CD8-positive, alpha-beta T cell (primary cell): ENCODE measurements at regions of chr6 and their contacts with region 1.

Region 1: DNA sequence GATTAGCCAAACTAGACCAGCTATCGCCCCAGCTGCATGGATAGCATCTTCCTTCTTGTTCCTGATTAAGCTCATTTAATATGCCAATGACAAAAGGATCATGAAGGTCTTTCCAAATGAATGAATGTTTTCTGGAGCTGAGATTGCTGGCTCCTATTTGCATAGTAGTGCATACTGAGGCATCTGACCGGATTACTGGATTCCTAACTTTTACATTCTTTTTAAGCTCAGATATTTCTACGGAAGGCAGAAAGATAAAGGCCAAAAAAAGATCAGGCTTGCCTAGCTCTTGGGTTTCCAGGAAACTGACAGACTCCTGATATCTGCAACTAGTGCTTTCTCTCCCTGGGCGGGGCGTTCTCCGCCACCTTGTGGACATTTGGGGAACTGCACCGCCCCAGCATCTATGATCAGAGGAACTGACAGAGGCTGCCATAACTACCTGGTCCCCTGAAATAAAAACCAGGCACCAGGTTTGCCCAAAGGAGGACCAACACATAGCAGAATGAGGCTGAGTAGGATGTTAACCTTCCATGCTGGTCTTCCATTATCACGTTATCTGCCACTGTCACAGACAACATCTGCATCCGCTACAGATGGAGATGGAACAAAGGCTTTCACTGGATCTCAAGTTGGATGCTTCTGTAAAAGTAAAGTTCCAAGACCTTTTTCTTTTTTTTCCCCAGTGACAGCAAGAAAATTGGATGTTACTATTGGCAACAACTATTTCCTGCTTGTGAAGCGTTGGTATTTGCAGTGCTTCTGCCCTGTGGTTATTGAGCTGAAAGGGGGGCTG is 33.2 kb downstream of the NT5E start:
- DNase-seq: peak; percentile 62 to 94 (median 78)
- ATAC-seq: peak; percentile 99
- H3K4me3 ChIP-seq: no peak overlapping the region
- H3K4me3 Mint-ChIP-seq: no peak overlapping the region
- H3K27ac ChIP-seq: no peak overlapping the region
- H3K27ac Mint-ChIP-seq: no peak overlapping the region
- H3K4me1 ChIP-seq: peaks cover 7% of the 10 kb centered on the region
- H3K4me1 Mint-ChIP-seq: peaks cover 13% of the 10 kb centered on the region
- H3K27me3 ChIP-seq: no peaks in the 10 kb centered on the region
- H3K27me3 Mint-ChIP-seq: no peaks in the 10 kb centered on the region
- CTCF ChIP-seq: peak; percentile 99

Region 2: GRCh38 chr6:85354761-85355618 is 128.1 kb before region 1 on chr6:
- CTCF ChIA-PET with region 1: interaction called, 130 read pairs
- POLR2A ChIA-PET with region 1: interaction called, 3 read pairs
- intact Hi-C with region 1: loop called (anchors 1 kb)
- DNase-seq: peak; percentile 14 to 81 (median 64)
- ATAC-seq: peak; percentile 87
- H3K4me3 ChIP-seq: no peak overlapping the region
- H3K4me3 Mint-ChIP-seq: no peak overlapping the region
- H3K27ac ChIP-seq: no peak overlapping the region
- H3K27ac Mint-ChIP-seq: no peak overlapping the region
- H3K4me1 ChIP-seq: no peaks in the 10 kb centered on the region
- H3K4me1 Mint-ChIP-seq: peaks cover 3% of the 10 kb centered on the region
- H3K27me3 ChIP-seq: peaks cover 0 to 2% of the 10 kb centered on the region in 2 experiments
- H3K27me3 Mint-ChIP-seq: no peaks in the 10 kb centered on the region
- CTCF ChIP-seq: peak; percentile 97

Region 3: GRCh38 chr6:85404502-85405174 is 78.5 kb before region 1 on chr6:
- CTCF ChIA-PET with region 1: interaction called, 13 read pairs
- POLR2A ChIA-PET with region 1: interaction called, 6 read pairs
- intact Hi-C with region 1: loop called in 1 of 2 experiments (anchors 2 kb)
- DNase-seq: no peak
- ATAC-seq: peak; percentile 26
- H3K4me3 ChIP-seq: no peak overlapping the region
- H3K4me3 Mint-ChIP-seq: peak overlapping the region; percentile 19
- H3K27ac ChIP-seq: peak overlapping the region in 1 of 2 experiments; percentile 22
- H3K27ac Mint-ChIP-seq: peak overlapping the region; percentile 91
- H3K4me1 ChIP-seq: peaks cover 56% of the 10 kb centered on the region
- H3K4me1 Mint-ChIP-seq: peaks cover 70% of the 10 kb centered on the region
- H3K27me3 ChIP-seq: no peaks in the 10 kb centered on the region
- H3K27me3 Mint-ChIP-seq: no peaks in the 10 kb centered on the region
- CTCF ChIP-seq: no peak

Region 4: GRCh38 chr6:85460921-85461797 is 21.9 kb before region 1 on chr6:
- CTCF ChIA-PET with region 1: interaction called, 187 read pairs
- POLR2A ChIA-PET with region 1: interaction called, 6 read pairs
- intact Hi-C with region 1: loop called in 1 of 2 experiments (anchors 1 kb)
- DNase-seq: peak in 7 of 9 experiments; percentile 26 to 75 (median 62)
- ATAC-seq: peak; percentile 64
- H3K4me3 ChIP-seq: peak overlapping the region in 1 of 2 experiments; percentile 0
- H3K4me3 Mint-ChIP-seq: peak overlapping the region; percentile 70
- H3K27ac ChIP-seq: peak overlapping the region; percentile 22 to 69
- H3K27ac Mint-ChIP-seq: peak overlapping the region; percentile 92
- H3K4me1 ChIP-seq: peaks cover 100% of the 10 kb centered on the region
- H3K4me1 Mint-ChIP-seq: peaks cover 98% of the 10 kb centered on the region
- H3K27me3 ChIP-seq: no peaks in the 10 kb centered on the region
- H3K27me3 Mint-ChIP-seq: peaks cover 2% of the 10 kb centered on the region
- CTCF ChIP-seq: no peak

Region 5: GRCh38 chr6:85506441-85507093 is 23.5 kb after region 1 on chr6:
- CTCF ChIA-PET with region 1: interaction called, 16 read pairs
- POLR2A ChIA-PET with region 1: no interaction called
- intact Hi-C with region 1: no loop called
- DNase-seq: no peak
- ATAC-seq: no peak
- H3K4me3 ChIP-seq: no peak overlapping the region
- H3K4me3 Mint-ChIP-seq: no peak overlapping the region
- H3K27ac ChIP-seq: no peak overlapping the region
- H3K27ac Mint-ChIP-seq: no peak overlapping the region
- H3K4me1 ChIP-seq: no peaks in the 10 kb centered on the region
- H3K4me1 Mint-ChIP-seq: no peaks in the 10 kb centered on the region
- H3K27me3 ChIP-seq: no peaks in the 10 kb centered on the region
- H3K27me3 Mint-ChIP-seq: no peaks in the 10 kb centered on the region
- CTCF ChIP-seq: no peak